Esophagus muscularis mucosa (tissue), 4 donors: ENCODE measurements at regions of chr2 and their contacts with region 1.

Region 1: DNA sequence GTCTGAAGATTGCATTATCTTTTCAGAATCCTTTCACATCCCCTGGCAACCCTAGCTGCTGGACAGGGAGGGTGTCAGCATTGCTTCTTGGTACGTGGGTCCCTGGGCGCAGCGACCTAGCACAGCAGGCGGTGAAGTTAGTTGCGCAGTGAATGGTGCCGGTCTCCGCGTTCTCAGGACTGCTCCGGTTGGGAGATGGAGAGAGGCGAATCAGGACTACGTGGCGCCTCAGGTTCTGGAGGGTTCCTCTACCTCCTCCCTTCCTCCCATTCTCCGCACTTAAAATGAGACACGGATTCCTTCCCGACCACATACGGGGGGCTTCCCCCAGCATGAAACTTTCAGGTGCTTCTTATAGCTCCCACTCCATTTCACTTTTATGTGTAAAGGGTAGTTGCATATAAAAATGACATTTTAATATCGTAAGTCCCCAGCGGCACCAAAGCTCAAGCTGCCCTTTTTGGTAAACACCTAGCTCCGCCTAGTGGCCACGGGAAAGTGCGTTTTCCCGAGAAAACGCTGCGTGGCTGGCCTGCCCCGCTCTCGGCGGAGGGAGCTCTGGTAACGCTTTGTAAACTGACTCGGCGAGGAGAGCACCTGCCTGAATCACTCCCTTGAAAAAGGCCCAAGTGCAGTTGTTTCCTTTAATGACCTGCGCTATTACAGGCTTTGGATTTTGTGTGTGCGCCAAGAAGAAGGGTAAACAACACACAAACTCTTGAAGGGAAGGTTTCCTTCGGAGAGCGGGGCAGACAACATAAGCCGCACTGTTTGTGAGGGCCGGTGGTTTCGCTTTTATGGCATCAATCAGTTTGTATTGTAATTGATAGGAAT is 32.9 kb upstream of the INHBB start:
- DNase-seq: peak; percentile 95
- H3K4me3 ChIP-seq: peak overlapping the region; percentile 43 to 57 (median 48)
- H3K27ac ChIP-seq: peak overlapping the region in 3 of 4 donors; percentile 10 to 56 (median 41)
- H3K4me1 ChIP-seq: peaks cover 9 to 18% (median 14%) of the 10 kb centered on the region in 4 donors
- H3K27me3 ChIP-seq: no peaks in the 10 kb centered on the region
- CTCF ChIP-seq: peak; percentile 86 to 89 (median 88)
- EP300 ChIP-seq: no peak
- POLR2A ChIP-seq: no peak

Region 2: DNA sequence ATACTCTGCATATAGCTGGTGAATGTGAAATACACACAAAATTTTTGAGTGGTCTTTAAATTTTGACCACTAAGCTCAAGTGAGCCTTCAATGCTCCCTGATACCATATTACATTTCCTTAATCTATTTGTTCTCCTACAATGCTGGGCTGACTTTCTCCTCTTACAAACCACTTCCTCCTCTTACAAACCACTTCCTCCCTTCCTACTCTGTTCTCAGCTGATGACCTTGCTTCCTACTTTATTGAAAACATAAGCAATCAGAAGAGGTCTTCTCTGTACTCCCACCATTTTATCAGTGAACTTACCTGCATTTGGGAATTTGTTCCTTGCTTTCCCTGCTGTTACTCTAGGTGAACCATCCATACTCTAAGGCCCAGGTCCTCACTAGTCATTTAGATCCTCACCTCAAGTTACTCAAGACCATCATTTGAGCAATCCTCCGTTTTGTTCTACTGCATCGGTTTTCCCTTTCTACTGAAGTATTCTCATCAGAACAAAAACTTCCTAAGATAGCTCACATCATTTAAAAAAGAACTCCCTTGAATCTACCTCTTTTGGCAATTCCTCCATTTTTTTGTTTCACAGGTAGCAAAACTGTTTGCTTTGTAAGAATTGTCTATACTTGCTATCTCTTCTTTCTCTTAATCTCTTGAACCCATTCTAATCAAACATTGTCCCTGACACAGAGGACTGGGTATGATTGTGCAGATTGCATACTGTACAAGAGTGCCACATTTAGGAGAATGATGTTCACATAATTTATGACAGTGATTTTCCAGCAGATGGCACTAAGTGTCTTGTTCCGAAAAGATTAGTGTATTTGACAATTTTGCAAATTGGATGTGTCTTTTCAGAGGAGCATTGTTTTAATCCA is 203.7 kb before region 1 on chr2:
- intact Hi-C with region 1: loop called (anchors 10 kb)
- DNase-seq: no peak
- H3K4me3 ChIP-seq: no peak overlapping the region
- H3K27ac ChIP-seq: no peak overlapping the region
- H3K4me1 ChIP-seq: peaks cover 25 to 30% (median 26%) of the 10 kb centered on the region in 4 donors
- H3K27me3 ChIP-seq: no peaks in the 10 kb centered on the region
- CTCF ChIP-seq: peak; percentile 35 to 45 (median 39)
- EP300 ChIP-seq: no peak
- POLR2A ChIP-seq: no peak

Region 3: DNA sequence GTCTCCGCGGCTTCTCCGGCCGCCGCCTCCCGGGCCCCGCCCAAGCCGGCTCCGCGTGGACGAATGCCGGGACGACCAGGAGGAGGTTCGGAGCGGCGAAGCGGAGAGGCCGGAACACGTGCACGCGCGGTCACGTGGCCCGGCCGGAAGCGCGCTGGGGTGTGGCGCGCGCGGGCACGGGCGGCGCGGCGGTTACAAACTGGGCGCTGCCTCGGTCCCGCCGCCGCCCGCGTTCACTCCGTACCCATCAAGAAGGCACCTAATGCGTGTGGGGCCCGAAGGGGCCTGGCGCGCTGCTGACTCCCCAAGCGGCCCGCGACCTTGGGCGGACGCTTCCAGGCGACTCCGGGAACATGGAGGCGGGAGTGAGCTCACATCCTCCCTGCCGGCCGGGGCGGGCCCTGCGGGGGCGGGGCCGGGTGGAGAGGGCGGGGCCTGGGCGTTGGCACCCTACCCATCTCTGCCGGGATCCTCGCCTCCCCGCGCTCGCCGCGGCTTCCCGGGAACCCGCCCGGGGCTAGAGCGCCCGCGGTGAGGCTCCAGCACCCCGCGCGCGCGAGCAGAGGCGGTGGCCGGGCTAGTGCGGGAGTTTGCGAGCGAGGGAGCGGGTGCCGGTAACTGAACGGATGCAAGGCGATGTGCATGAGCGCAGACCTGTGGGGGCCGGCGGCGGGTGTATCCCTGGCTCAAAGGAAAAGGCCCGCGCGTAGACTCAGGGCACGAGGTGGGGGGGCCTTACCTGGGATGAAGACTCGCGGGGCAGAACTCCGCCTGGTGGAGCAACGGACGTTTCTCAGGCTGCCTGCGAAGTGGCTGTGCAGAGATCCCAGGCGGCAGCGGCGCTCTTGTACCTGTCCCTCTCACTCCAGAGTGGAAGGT is 89.8 kb before region 1 on chr2 and contains the start of gene TMEM185B:
- intact Hi-C with region 1: loop called (anchors 10 kb)
- DNase-seq: peak; percentile 98
- H3K4me3 ChIP-seq: peak within 1 kb of the TSS; percentile 69 to 83 (median 74)
- H3K27ac ChIP-seq: peak within 1 kb of the TSS; percentile 89 to 94 (median 92)
- H3K4me1 ChIP-seq: peaks cover 24 to 48% (median 39%) of the 10 kb centered on the region in 4 donors
- H3K27me3 ChIP-seq: no peaks in the 10 kb centered on the region
- CTCF ChIP-seq: peak in 1 of 3 experiments; percentile 26
- EP300 ChIP-seq: no peak
- POLR2A ChIP-seq: peak; percentile 25
- total RNA-seq, gene TMEM185B: 21.6 to 33.8 (median 31.9) TPM

Region 4: DNA sequence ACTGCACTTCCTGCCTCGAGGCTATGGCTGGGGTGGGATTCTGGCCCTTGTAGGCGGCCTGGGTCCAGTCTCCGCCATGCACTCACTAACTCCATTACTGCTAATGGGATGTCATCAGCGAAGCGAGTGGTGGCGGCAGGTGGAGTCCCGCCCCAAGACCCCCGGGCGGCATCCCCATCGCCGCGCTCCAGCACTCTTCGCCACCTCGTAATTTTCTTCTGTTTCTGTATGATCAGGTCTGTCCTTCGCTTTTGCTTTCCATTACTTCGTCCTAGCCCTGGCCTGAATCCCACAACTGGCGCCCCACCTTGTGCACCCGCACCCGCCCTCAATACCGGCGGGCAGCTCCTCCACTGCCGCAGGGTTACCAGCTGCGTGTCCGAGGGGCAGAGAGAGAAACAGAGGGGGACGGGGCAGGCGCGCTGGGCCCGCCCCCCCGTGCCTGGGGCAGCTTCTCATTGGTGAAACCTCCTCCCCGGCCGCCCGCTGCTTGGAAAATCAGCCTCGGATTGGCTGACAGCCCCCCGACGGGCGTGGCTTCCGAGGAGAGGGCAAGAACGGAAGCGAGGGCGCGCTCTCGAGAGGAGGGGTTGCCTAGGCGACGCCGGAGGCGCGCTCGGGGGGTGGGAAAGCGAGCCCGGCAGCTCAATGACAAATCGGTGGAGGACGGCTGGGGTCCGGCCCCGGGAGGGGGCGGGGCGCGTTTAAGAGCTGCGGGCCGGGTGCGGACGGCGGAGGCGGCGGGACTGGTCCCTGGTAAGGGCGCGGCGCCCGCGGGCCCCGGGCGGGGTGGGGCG is 60.7 kb before region 1 on chr2 and contains the start of gene RALB:
- intact Hi-C with region 1: loop called (anchors 10 kb)
- DNase-seq: peak; percentile 100
- H3K4me3 ChIP-seq: peak within 1 kb of the TSS; percentile 78 to 100 (median 88)
- H3K27ac ChIP-seq: peak within 1 kb of the TSS; percentile 87 to 98 (median 92)
- H3K4me1 ChIP-seq: peaks cover 23 to 47% (median 41%) of the 10 kb centered on the region in 4 donors
- H3K27me3 ChIP-seq: no peaks in the 10 kb centered on the region
- CTCF ChIP-seq: no peak
- EP300 ChIP-seq: no peak
- POLR2A ChIP-seq: no peak
- total RNA-seq, gene RALB: 41.5 to 59.1 (median 54.4) TPM